Activated CD8-positive, alpha-beta T cell treated with anti-CD3 and anti-CD28 coated beads for 36 hours (primary cell): ENCODE measurements at regions of chr19 and their contacts with region 1.

Region 1: DNA sequence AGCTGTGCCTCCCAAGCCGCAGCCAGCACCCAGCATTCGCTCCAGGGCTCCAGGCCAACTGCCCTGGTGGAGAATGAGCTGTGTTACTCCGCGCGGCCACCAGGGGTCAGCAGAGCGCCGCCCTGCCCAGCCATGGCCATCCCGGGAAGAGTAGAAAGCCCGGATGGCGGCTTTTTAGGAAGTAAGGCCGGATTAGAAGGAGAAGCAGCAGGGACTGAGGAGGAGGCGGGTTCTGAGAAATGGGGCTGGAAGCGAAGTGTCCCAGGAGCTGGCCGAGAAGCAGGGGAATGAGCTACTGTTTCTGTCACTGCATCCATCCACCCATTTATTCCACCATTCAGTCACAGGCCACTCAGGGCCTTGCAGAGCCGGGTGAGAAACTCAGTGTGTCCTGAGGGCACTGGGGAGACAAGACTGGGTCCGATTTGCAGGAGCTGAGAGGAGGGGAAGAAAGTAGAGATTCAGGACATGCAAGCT is 6.6 kb upstream of the NPAS1 start:
- DNase-seq: peak; percentile 65
- ATAC-seq: peak; percentile 96
- H3K4me3 Mint-ChIP-seq: no peak overlapping the region
- H3K27ac Mint-ChIP-seq: no peak overlapping the region
- H3K4me1 Mint-ChIP-seq: peaks cover 9% of the 10 kb centered on the region
- H3K27me3 Mint-ChIP-seq: peaks cover 4% of the 10 kb centered on the region
- CTCF ChIP-seq: peak; percentile 100

Region 2: GRCh38 chr19:46776927-46777911 is 235.9 kb before region 1 on chr19:
- CTCF ChIA-PET with region 1: no interaction called
- POLR2A ChIA-PET with region 1: no interaction called
- intact Hi-C with region 1: no loop called
- DNase-seq: peak; percentile 45
- ATAC-seq: peak; percentile 43
- H3K4me3 Mint-ChIP-seq: no peak overlapping the region
- H3K27ac Mint-ChIP-seq: peak overlapping the region; percentile 42
- H3K4me1 Mint-ChIP-seq: peaks cover 22% of the 10 kb centered on the region
- H3K27me3 Mint-ChIP-seq: no peaks in the 10 kb centered on the region
- CTCF ChIP-seq: no peak

Region 3: DNA sequence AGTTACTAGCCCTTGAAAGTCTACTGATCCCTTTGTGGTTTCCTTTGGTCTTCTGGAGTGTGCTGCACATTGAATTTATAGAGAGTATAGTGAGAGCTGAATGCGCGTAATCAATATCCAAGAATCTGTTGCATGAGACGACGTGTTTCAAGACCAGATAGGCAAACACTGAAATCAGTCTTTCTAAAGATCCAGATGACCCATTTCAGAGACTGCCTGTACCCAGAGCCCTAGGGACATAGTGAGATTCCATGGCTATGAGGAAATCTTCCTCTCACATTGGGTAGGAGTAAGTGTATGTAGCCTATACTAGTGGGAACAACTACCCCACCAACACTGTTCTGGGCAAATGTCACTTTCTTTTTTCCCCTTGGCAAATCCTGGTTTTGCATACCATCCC is 103.7 kb before region 1 on chr19:
- CTCF ChIA-PET with region 1: interaction called, 11 read pairs
- POLR2A ChIA-PET with region 1: no interaction called
- intact Hi-C with region 1: no loop called
- DNase-seq: no peak
- ATAC-seq: no peak
- H3K4me3 Mint-ChIP-seq: no peak overlapping the region
- H3K27ac Mint-ChIP-seq: no peak overlapping the region
- H3K4me1 Mint-ChIP-seq: peaks cover 32% of the 10 kb centered on the region
- H3K27me3 Mint-ChIP-seq: no peaks in the 10 kb centered on the region
- CTCF ChIP-seq: no peak

Region 4: GRCh38 chr19:46963093-46963734 is 49.9 kb before region 1 on chr19:
- CTCF ChIA-PET with region 1: interaction called, 12 read pairs
- POLR2A ChIA-PET with region 1: no interaction called
- intact Hi-C with region 1: no loop called
- DNase-seq: peak; percentile 54
- ATAC-seq: peak; percentile 47
- H3K4me3 Mint-ChIP-seq: peak overlapping the region; percentile 16
- H3K27ac Mint-ChIP-seq: peak overlapping the region; percentile 88
- H3K4me1 Mint-ChIP-seq: peaks cover 43% of the 10 kb centered on the region
- H3K27me3 Mint-ChIP-seq: no peaks in the 10 kb centered on the region
- CTCF ChIP-seq: no peak

Region 5: DNA sequence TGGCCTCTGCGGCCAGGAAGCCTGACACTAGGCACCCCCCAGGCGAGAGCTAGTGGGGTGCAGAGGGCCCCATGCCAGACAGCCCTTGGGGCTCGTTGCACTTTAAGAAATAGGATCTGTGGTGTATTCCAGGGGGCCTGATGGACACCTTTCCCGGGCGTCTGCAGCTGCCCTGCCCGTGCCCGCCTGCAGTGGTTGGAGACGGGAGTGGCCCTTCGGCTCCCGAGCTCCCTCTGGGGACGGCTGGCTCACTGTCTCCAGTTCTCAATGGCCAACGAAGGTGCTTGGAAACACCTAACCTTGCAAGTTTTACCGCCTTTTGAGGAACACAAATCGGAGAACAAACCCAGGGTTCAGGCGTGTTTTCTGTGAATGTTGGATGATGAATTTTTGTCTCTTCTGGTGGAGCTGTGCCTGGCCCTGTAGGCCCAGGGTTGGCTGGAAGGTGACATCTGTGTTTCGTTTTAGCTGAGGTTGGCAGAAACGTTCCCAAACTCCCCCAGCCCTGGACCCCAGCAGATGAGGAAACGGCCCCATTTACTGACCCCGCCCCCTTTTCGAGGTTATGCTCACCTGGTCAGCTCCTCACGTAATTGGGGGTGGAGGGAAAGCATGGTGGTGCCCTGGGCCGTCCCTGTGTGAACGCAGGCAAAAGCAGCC is 10.8 kb before region 1 on chr19:
- CTCF ChIA-PET with region 1: interaction called, 44 read pairs
- POLR2A ChIA-PET with region 1: interaction called, 3 read pairs
- intact Hi-C with region 1: no loop called
- DNase-seq: no peak
- ATAC-seq: no peak
- H3K4me3 Mint-ChIP-seq: no peak overlapping the region
- H3K27ac Mint-ChIP-seq: no peak overlapping the region
- H3K4me1 Mint-ChIP-seq: peaks cover 8% of the 10 kb centered on the region
- H3K27me3 Mint-ChIP-seq: peaks cover 9% of the 10 kb centered on the region
- CTCF ChIP-seq: no peak

Region 6: GRCh38 chr19:47075179-47075810 is 62.2 kb after region 1 on chr19:
- CTCF ChIA-PET with region 1: interaction called, 10 read pairs
- POLR2A ChIA-PET with region 1: no interaction called
- intact Hi-C with region 1: no loop called
- DNase-seq: no peak
- ATAC-seq: no peak
- H3K4me3 Mint-ChIP-seq: no peak overlapping the region
- H3K27ac Mint-ChIP-seq: no peak overlapping the region
- H3K4me1 Mint-ChIP-seq: peaks cover 4% of the 10 kb centered on the region
- H3K27me3 Mint-ChIP-seq: no peaks in the 10 kb centered on the region
- CTCF ChIP-seq: no peak

Region 7: GRCh38 chr19:47130591-47131227 is 117.6 kb after region 1 on chr19 and contains the start of gene SAE1:
- CTCF ChIA-PET with region 1: interaction called, 42 read pairs
- POLR2A ChIA-PET with region 1: interaction called, 3 read pairs
- intact Hi-C with region 1: no loop called
- DNase-seq: peak; percentile 93
- ATAC-seq: peak; percentile 91
- H3K4me3 Mint-ChIP-seq: peak within 1 kb of the TSS; percentile 100
- H3K27ac Mint-ChIP-seq: peak within 1 kb of the TSS; percentile 100
- H3K4me1 Mint-ChIP-seq: peaks cover 37% of the 10 kb centered on the region
- H3K27me3 Mint-ChIP-seq: peaks cover 2% of the 10 kb centered on the region
- CTCF ChIP-seq: peak; percentile 51
- total RNA-seq, gene SAE1: 125 to 127 TPM